Caco-2 (cell line): ENCODE measurements at regions of chr11 and their contacts with region 1.

Region 1: DNA sequence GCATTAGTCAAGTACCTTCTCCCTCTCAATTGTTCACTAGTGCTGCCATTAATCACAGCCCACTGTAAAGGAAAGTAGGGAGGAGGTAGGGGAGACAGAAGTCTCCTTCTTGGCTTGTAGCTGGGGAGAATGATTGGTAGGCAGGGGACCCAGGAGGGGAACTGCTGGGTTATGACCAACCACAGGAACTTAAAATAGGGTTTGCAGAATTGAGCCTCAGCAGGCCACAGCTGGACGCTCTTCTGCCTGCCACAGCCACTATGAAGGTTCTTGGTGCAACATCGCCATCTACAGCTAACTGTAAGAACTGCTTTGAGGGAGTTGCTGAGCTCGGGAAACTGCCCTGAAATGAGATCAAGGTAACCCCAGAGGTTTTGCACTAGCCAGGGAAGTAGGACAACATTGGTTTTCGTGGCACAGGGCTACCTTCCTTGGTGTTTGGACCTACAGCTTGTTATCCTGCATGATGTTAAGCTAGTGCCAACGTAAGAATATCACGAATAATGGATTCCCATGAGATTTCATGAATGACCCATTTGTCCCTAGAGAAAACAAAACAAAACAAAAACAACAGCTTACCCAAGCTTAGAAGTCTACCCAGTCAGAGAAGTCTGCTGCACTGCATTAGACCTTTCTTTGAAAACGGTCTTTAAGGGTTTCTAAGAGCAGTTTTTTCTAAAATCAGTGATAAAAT is 787.1 kb upstream of the API5 start:
- DNase-seq: peak; percentile 56 to 72
- H3K4me3 ChIP-seq: no peak overlapping the region
- H3K4me3 Mint-ChIP-seq: no peak overlapping the region
- H3K27ac Mint-ChIP-seq: no peak overlapping the region
- H3K4me1 ChIP-seq: no peaks in the 10 kb centered on the region
- H3K4me1 Mint-ChIP-seq: no peaks in the 10 kb centered on the region
- H3K27me3 ChIP-seq: no peaks in the 10 kb centered on the region
- H3K27me3 Mint-ChIP-seq: peaks cover 2% of the 10 kb centered on the region
- CTCF ChIP-seq: peak; percentile 75 to 81

Region 2: GRCh38 chr11:41461057-41461681 is 1063.5 kb before region 1 on chr11:
- CTCF ChIA-PET with region 1: interaction called, 8 read pairs
- POLR2A ChIA-PET with region 1: no interaction called
- intact Hi-C with region 1: loop called (anchors 1 kb)
- DNase-seq: peak in 1 of 2 experiments; percentile 28
- H3K4me3 ChIP-seq: no peak overlapping the region
- H3K4me3 Mint-ChIP-seq: no peak overlapping the region
- H3K27ac Mint-ChIP-seq: no peak overlapping the region
- H3K4me1 ChIP-seq: no peaks in the 10 kb centered on the region
- H3K4me1 Mint-ChIP-seq: no peaks in the 10 kb centered on the region
- H3K27me3 ChIP-seq: no peaks in the 10 kb centered on the region
- H3K27me3 Mint-ChIP-seq: peaks cover 5% of the 10 kb centered on the region
- CTCF ChIP-seq: peak; percentile 62 to 81

Region 3: DNA sequence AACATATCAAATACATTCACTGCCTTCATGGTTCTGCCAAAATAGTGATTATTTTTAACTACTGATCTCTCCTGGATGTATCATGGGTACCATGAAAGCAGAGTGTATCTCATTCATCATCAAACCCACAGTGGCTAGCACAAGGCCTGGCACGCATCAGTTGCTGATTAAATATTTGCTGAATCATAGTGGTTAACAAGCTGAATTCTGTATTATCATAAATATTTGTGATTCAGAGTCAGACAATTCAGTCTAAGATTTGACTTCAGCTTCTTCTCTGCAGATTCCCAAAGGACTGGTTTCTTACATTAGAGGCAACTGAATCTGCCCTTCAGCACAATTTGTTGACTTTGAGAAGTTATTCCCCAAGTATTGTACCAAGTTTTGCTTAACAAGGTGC is 349.5 kb before region 1 on chr11:
- CTCF ChIA-PET with region 1: no interaction called
- POLR2A ChIA-PET with region 1: no interaction called
- intact Hi-C with region 1: loop called (anchors 10 kb)
- DNase-seq: no peak
- H3K4me3 ChIP-seq: no peak overlapping the region
- H3K4me3 Mint-ChIP-seq: no peak overlapping the region
- H3K27ac Mint-ChIP-seq: no peak overlapping the region
- H3K4me1 ChIP-seq: no peaks in the 10 kb centered on the region
- H3K4me1 Mint-ChIP-seq: no peaks in the 10 kb centered on the region
- H3K27me3 ChIP-seq: no peaks in the 10 kb centered on the region
- H3K27me3 Mint-ChIP-seq: no peaks in the 10 kb centered on the region
- CTCF ChIP-seq: no peak

Region 4: DNA sequence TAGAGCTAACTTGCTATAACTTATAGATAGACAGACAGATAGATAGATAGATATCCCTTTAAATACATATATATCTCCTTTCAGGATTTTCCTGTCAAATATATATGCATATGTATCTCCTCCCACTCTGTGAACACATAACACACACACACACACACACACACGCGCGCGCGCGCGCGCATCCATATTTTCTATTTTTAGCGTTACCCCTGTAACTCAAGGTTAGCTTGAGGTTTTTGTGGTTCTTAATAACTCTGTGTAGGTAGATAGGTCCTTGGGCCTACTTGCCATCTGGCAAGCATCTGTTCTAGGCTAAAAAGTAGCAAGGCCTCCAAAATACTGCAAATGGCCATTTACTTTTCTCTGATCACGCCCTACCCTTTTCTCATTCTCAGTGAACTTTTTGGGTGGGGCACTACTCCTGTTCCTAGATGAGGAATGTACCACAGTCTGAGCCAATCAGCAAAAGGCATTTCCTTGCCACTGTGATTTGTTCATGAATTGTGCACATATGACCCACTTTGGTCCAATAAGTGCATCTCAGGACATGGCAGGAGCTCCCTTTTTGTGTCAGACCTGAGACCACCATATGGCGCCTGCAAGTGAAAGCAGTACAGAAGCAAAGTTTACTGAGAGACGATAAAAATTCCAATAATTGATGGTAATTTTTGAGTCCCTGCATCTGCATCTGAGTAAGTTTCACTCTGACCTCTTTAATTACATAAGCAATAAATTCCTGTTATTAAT is 46.6 kb after region 1 on chr11:
- CTCF ChIA-PET with region 1: no interaction called
- POLR2A ChIA-PET with region 1: no interaction called
- intact Hi-C with region 1: no loop called
- DNase-seq: no peak
- H3K4me3 ChIP-seq: no peak overlapping the region
- H3K4me3 Mint-ChIP-seq: no peak overlapping the region
- H3K27ac Mint-ChIP-seq: no peak overlapping the region
- H3K4me1 ChIP-seq: no peaks in the 10 kb centered on the region
- H3K4me1 Mint-ChIP-seq: no peaks in the 10 kb centered on the region
- H3K27me3 ChIP-seq: no peaks in the 10 kb centered on the region
- H3K27me3 Mint-ChIP-seq: no peaks in the 10 kb centered on the region
- CTCF ChIP-seq: no peak